Adrenal gland (tissue), 19 donors: ENCODE measurements at regions of chr5 and their contacts with region 1.

Region 1: DNA sequence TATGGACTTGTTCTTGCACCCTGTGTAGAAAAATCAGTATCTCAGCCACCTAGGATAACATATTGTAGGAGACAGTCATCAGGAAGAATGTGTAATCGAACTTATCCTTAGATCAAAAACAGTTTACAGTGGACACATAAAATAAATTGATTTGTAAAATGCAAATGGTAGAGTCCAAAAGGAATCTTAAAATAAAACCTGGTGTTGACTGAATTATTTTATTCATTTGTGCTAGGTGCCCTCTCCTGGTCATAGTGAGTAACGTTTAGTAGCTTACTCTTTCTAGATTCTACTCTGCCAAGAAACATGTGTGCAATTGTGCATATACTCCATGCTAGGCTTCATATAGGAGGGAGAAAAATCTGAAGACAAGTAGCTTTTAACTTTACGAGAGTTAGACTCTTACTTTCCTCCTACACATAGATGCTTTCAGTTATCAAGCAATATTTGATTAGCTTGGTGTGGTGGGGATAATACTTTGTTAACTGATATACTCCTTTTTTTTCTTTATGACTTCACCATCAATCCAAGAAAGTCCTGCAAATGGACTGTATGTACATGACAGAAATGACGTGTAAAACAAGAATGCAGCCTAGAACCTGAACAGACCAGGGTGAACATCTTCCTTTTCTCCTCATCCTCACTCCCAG is 23.7 kb upstream of the LOX start:
- DNase-seq: peak in 1 of 7 donors; percentile 15
- H3K4me3 ChIP-seq: no peak overlapping the region
- H3K27ac ChIP-seq: no peak overlapping the region
- H3K4me1 ChIP-seq: no peaks in the 10 kb centered on the region
- H3K27me3 ChIP-seq: no peaks in the 10 kb centered on the region
- CTCF ChIP-seq: peak; percentile 40 to 67 (median 59)
- POLR2A ChIP-seq: no peak

Region 2: DNA sequence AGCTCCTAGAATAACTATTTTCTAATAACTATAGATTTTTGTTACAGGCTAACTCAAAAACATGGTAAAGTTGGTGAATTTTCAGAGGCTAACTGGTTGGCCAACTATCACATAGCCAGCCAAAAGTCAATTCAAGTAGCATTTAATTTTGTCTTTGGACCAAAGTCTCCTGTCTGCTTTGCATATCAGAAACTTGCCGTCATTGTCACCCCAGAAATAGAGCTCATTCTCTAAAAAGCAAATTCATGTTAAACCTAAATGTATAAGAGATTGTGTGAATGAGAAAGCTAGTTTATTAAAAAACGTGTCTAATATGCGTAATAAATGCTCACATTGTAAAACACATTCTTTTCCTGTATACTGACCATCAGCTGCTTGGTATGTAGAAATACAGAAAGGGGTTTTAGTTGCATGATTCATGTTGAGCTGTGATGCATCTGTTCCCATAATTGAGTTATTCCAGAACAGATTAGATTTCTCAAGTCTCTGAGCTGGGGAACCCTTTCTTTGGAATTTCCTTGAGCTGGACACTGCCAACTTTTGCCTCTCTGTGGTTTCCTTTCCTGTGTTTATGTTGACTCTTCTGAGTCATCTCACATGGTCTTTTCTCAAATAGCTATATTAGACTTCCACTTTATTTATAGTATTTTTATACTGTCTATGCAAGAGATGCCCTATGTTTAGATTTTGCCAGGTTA is 132.7 kb before region 1 on chr5:
- intact Hi-C with region 1: loop called in 1 of 2 experiments (anchors 10 kb)
- DNase-seq: no peak
- H3K4me3 ChIP-seq: no peak overlapping the region
- H3K27ac ChIP-seq: no peak overlapping the region
- H3K4me1 ChIP-seq: peaks cover 8 to 19% of the 10 kb centered on the region in 2 donors
- H3K27me3 ChIP-seq: no peaks in the 10 kb centered on the region
- CTCF ChIP-seq: no peak
- POLR2A ChIP-seq: no peak

Region 3: GRCh38 chr5:121982146-121982892 is 119.4 kb before region 1 on chr5:
- intact Hi-C with region 1: loop called in 1 of 2 experiments (anchors 10 kb)
- DNase-seq: no peak
- H3K4me3 ChIP-seq: no peak overlapping the region
- H3K27ac ChIP-seq: no peak overlapping the region
- H3K4me1 ChIP-seq: peaks cover 10 to 11% of the 10 kb centered on the region in 2 donors
- H3K27me3 ChIP-seq: no peaks in the 10 kb centered on the region
- CTCF ChIP-seq: no peak
- POLR2A ChIP-seq: no peak